ENCODE measurements at regions of chr14 and their contacts with region 1.

Region 1: DNA sequence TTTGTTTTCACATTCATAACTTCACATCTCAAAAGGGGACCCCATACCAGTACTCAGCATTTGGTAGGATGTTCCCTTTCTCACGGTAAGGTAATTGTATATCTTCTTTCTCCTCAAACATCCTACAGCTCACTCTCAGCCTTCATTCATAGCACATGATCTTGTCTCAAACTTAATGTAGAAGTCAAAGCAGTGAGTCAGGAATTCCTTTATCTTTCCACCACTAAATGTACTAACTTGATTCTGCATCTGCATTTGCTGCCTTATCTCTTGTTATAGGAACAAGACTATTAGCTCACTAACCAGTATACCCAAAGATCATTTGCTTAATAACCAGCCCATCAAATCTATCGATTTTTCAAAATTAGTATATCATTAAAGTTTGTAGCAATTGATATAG is 22.9 kb downstream of the CPSF2 start:
- DNase-seq: no peak
- H3K4me3 ChIP-seq: no peak overlapping the region
- H3K27ac ChIP-seq: no peak overlapping the region
- H3K4me1 ChIP-seq: no peaks in the 10 kb centered on the region
- H3K27me3 ChIP-seq: no peaks in the 10 kb centered on the region
- CTCF ChIP-seq: no peak
- EP300 ChIP-seq: no peak
- POLR2A ChIP-seq: no peak

Region 2: GRCh38 chr14:92456215-92457015 is 311.7 kb after region 1 on chr14:
- intact Hi-C with region 1: loop called (anchors 10 kb)
- DNase-seq: no peak
- H3K4me3 ChIP-seq: no peak overlapping the region
- H3K27ac ChIP-seq: no peak overlapping the region
- H3K4me1 ChIP-seq: peaks cover 10 to 24% (median 14%) of the 10 kb centered on the region in 4 donors
- H3K27me3 ChIP-seq: no peaks in the 10 kb centered on the region
- CTCF ChIP-seq: peak; percentile 60 to 72 (median 60)
- EP300 ChIP-seq: no peak
- POLR2A ChIP-seq: no peak